Left ventricle myocardium inferior (tissue), 1 donor: ENCODE measurements at regions of chr4 and their contacts with region 1.

Region 1: GRCh38 chr4:47836641-47837093 is 1.2 kb downstream of the CORIN start:
- DNase-seq: peak; percentile 85
- H3K4me3 ChIP-seq: peak overlapping the region; percentile 74
- H3K27ac ChIP-seq: peak overlapping the region; percentile 89
- H3K4me1 ChIP-seq: peaks cover 42% of the 10 kb centered on the region
- H3K27me3 ChIP-seq: no peaks in the 10 kb centered on the region
- CTCF ChIP-seq: peak; percentile 84

Region 2: DNA sequence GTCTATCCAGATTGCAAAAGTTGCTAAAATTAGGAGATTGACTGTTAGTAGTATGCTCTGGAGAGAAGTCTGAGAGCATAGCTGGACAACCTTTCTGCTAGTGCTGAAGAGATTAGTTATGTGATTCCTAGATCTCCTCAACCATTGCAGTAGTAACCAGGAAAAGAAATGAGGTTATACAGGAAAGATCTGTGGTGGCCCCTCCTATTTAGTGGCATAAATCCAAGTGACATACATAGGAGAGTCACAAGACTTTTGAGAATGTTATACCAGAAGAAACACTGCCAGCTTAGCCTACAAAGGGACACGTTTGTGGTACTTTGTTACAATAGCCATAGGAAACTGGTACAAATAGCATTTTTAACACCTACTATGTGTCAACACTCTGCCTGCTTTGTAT is 246.3 kb before region 1 on chr4:
- intact Hi-C with region 1: no loop called
- DNase-seq: no peak
- H3K4me3 ChIP-seq: no peak overlapping the region
- H3K27ac ChIP-seq: no peak overlapping the region
- H3K4me1 ChIP-seq: no peaks in the 10 kb centered on the region
- H3K27me3 ChIP-seq: no peaks in the 10 kb centered on the region
- CTCF ChIP-seq: no peak

Region 3: DNA sequence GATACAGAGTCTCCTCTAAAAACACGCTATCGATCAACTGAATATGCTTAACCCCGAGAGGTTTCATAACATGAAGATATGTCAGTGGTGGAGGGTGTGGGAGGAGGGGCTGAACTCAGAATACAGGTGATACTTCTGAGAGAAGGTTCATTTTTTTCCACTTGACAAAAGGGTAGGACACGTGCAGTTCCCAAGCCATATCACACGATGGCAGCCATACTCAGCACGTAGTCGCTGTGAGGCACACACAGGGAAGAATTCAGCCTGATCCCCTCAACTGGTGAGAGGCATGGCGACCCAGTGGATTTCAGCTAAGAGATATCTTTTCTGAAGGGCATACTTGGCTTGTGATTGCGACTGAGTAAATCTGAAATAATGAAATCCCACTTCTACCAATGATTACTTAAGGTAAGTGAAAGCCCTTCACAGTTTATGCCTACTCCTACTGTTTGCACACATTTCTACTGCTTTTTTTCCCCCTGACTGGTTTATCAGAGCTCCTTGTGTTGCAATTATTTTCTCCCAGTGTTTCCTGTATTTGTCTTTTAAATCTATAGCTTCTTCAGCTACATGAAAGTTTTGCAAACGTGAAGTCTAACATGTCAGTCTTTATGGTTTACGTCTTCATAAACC is 131.9 kb before region 1 on chr4:
- intact Hi-C with region 1: loop called (anchors 2 kb)
- DNase-seq: peak; percentile 37
- H3K4me3 ChIP-seq: peak overlapping the region; percentile 58
- H3K27ac ChIP-seq: peak overlapping the region; percentile 68
- H3K4me1 ChIP-seq: peaks cover 46% of the 10 kb centered on the region
- H3K27me3 ChIP-seq: no peaks in the 10 kb centered on the region
- CTCF ChIP-seq: peak; percentile 57

Region 4: GRCh38 chr4:47954245-47954644 is 117.6 kb after region 1 on chr4:
- intact Hi-C with region 1: no loop called
- DNase-seq: no peak
- H3K4me3 ChIP-seq: no peak overlapping the region
- H3K27ac ChIP-seq: no peak overlapping the region
- H3K4me1 ChIP-seq: no peaks in the 10 kb centered on the region
- H3K27me3 ChIP-seq: peaks cover 5% of the 10 kb centered on the region
- CTCF ChIP-seq: no peak